ENCODE measurements at regions of chr6 and their contacts with region 1.

Region 1: DNA sequence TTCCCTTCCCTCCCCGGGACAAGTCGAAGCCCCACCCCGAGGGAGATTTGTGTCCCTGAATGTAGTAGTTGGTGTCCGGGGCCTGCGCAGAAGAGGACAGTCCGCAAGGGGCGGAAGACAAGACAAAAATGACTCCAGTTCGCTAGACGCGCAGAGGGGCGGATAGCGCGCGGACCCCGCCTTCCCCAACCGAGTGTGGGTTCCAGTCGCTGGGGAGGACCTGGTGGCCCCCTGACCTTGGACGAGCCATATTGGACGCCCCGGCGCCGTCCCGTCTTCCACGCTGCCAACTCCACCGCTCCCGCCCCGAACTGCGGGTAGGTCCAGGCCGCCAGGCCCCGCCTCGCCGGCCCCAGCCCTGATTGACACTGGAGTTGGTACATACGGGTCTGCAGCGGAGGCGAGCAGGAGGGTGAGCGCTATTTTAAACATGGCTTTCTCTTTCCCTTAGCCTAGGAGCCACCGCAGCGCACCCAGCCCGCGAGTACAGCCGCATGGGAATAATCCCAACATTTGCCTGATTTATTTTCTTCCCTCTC is 802 bp downstream of the HMGN3 start:
- DNase-seq: peak; percentile 89 to 93
- ATAC-seq: peak; percentile 91

Region 2: DNA sequence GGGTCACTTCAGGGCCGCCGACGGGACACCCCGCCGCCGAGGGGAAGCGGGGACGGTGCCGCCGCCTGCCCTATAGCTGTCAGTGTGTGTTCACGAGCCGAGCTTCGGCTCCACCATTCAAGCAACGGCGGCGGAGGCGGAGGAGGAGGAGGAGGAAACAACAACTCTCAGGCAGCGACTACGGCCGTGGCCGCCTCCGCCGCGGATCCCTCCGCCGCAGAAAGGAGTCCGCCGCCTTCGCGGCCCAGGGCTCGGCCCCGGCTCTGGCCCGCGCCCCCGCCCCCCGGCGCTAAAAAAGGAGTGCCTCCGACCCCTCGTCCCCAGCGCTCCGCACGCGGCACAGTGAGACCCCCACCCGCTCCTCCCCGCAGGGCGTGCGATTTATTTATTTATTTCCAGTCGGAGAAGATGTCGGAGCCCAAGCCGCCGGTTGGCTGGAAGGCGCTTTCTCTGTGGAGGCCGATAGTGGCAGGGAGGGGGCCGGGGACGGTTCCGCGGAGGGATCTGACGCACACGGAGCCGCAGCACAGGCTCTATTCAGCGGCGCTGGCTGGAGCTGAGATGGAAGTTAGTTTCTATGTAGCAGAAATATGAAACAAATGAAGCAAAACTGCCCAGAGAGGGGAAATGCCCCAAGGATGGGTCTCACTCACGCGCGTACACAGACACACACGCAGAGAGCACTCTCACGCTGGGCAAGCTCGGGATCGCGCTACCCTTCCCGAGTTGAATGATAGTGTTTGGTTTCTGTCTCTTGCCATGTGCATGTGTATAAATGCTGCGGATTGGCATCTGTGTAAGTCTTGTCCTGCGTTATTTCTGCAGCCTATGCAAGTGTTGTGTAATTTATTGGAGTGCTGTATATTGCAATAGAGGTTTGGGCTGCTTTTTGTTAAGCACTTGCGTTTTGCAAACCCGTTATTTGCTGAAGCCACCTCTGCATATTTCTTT is 155.3 kb before region 1 on chr6 and contains the start of gene PHIP:
- intact Hi-C with region 1: loop called in 1 of 2 experiments (anchors 5 kb)
- DNase-seq: peak; percentile 94
- ATAC-seq: peak; percentile 89
- total RNA-seq, gene PHIP: 17.9 to 19.2 TPM

Measured in left colon (tissue), 2 donors.